Posterior cingulate gyrus (tissue), 11 donors: ENCODE measurements at regions of chr7 and their contacts with region 1.

Region 1: GRCh38 chr7:100852048-100852872 is at the start of gene SLC12A9:
- DNase-seq: peak; percentile 79 to 99 (median 88)

Region 2: GRCh38 chr7:100705753-100706671 is 146.2 kb before region 1 on chr7 and contains the start of gene POP7:
- intact Hi-C with region 1: loop called (anchors 1 kb)
- DNase-seq: peak; percentile 92 to 99 (median 96)

Region 3: DNA sequence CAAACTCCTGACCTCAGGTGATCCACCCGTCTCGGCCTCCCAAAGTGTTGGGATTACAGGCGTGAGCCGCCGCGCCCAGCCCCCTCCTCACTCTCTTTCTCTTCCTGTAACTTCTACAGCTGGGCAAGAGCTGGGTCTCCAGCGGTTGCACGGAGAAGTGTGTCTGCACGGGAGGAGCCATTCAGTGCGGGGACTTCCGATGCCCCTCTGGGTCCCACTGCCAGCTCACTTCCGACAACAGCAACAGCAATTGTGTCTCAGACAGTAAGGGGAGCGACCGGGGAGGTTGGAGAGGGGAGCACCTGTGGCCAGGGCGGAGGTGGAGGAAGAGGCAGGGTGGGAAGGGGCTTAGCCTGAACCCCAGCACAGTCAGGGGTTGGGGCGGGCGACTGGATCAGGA is 66.4 kb before region 1 on chr7:
- intact Hi-C with region 1: no loop called
- DNase-seq: no peak

Region 4: DNA sequence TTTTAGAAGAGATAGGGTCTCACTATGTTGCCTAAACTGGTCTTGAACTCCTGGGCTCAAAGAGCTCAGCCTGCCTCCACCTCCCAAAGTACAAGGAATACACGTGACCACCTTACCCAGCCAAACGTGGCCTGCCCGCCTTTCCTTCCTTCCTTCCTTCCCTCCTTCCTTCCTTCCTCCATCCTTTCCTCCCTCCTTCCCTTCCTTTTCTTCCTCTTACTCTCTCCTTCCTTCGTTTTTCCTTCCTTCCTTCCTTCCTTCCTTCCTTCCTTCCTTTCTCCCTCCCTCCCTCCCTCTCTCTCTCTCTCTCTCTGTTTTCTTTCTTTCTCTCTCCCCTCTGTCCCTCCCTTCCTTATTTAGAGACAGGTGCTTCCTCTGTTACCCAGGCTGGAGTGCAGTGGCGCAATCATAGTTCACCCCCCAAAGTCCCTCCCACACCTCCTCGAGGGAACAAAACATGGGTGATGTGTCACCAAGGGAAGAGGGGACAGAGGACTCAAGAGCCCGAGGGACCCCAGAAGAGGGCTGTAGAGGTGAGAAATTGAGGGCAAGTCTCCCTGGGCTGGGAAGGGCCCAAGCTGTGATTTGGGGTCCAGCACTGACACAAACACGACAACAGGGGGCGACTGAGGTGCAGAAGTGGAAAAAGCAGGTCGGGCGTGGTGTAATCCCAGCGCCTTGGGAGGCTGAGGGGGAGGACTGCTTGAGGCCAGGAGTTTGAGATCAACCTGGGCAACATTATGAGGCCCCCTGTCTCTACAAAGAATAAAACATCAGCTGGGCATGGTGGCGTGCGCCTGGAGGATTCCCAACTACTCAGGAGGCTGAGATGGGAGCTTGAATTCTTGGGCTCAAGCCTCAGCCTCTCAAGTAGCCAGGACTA is 53.0 kb before region 1 on chr7:
- intact Hi-C with region 1: loop called (anchors 1 kb)
- DNase-seq: peak in 5 of 10 donors; percentile 24 to 86 (median 34)

Region 5: GRCh38 chr7:100837099-100837836 is 15.0 kb before region 1 on chr7:
- intact Hi-C with region 1: loop called (anchors 2 kb)
- DNase-seq: peak; percentile 89 to 99 (median 94)

Region 6: GRCh38 chr7:100889761-100890634 is 37.7 kb after region 1 on chr7:
- intact Hi-C with region 1: no loop called
- DNase-seq: peak; percentile 88 to 99 (median 95)

Region 7: DNA sequence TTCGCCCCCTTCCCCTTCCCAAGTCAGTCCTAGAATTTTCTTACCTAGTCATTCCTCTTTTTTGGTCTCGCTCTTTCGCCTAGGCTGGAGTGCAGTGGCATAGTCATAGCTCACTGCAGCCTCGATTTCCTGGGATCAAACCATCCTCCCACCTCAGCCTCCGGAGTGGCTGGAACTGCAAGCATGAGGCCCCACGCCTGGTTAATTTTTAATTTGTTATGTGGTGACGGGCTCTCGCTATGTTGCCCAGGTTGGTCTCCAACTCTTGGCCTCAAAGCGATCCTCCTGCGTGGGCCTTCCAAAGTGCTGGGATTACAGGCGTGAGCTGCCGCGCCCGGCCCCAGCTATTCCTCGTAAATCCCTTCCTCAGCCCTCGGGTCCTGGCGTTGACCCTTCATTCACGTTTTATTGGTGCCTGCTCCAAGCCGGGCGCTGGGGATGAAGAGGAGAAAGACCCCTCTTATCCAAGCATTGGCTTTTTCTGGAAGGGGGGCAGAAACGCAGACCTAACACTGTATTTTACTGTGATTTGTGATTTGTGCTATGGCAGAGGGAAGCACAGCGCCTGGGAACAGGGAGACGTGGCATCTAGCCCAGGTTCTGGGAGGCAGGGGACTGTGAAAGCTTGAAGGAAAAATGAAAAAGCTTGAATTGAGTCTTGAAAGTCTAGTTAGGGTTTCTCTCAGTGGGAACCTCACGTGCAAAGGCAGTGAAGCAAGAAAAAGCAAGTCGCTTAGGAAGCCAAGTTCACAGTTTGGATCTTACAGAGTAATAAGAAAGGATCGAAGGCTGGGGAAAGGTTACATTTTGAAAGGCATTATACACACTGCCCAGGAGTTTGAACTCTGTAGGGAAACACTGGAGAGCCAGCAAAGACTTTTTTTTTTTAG is 366.2 kb after region 1 on chr7:
- intact Hi-C with region 1: no loop called
- DNase-seq: no peak